H1 (cell line): ENCODE measurements at regions of chr6 and their contacts with region 1.

Region 1: GRCh38 chr6:32971581-32972352 is 3.4 kb downstream of the BRD2 start:
- DNase-seq: peak; percentile 98 to 99
- H3K4me3 ChIP-seq: peak overlapping the region; percentile 90 to 99 (median 98)
- H3K27ac ChIP-seq: peak overlapping the region; percentile 99
- H3K4me1 ChIP-seq: peaks cover 0 to 14% (median 7%) of the 10 kb centered on the region in 4 experiments; a peak in 5 of 7 replicates
- H3K27me3 ChIP-seq: no peaks in the 10 kb centered on the region
- CTCF ChIP-seq: no peak; a peak in 1 of 4 replicates
- EP300 ChIP-seq: no peak; a peak in 1 of 3 replicates
- POLR2A ChIP-seq: peak in 1 of 2 experiments; percentile 99; a peak in 2 of 3 replicates
- RAD21 ChIP-seq: no peak

Region 2: DNA sequence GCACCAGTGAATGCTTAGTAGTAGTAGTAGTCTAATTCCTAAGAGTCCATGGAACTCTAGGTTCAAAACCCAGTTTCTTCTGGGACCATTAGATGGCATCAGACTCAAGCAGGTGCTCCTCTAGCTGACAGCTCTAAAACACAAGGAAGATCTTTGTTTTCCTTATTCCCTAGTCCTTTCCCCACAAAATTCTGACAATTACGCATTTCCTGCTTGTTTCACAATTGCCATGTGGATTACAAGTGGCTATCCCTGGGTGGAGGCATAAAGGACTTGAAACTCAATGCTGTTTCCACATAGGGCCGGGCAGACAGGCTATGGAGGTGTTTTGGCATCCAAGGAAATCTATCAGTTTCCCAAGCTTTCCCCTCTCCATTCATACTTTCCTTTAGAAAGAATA is 145.8 kb before region 1 on chr6:
- CTCF ChIA-PET with region 1: interaction called, 4 read pairs
- POLR2A ChIA-PET with region 1: interaction called, 13 read pairs
- DNase-seq: no peak
- H3K4me3 ChIP-seq: no peak overlapping the region
- H3K27ac ChIP-seq: no peak overlapping the region
- H3K4me1 ChIP-seq: peaks cover 0 to 4% (median 0%) of the 10 kb centered on the region in 4 experiments; a peak in 1 of 7 replicates
- H3K27me3 ChIP-seq: no peaks in the 10 kb centered on the region; a peak in 1 of 7 replicates
- CTCF ChIP-seq: peak in 2 of 3 experiments; percentile 56 to 63; a peak in 3 of 4 replicates
- EP300 ChIP-seq: no peak
- POLR2A ChIP-seq: no peak
- RAD21 ChIP-seq: peak; percentile 73 to 83

Region 3: DNA sequence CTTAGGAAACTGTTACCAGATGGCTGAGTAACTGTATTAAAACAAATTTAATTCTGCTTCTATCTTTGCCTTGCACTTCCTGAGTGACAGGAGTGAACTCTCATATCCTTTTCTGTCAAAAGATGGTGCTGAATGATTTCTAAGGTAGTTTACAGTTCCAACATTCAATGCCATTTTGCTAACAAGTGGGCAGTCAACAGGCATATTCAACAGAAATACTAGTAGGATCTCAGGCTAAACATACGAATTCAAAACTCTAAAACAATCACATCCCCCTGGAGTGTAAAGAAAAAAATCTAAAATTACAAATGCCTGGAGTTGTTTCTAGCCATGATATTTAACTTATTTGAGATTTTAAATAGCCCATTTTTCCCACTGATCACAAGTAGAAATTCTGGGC is 111.1 kb before region 1 on chr6:
- CTCF ChIA-PET with region 1: interaction called, 3 read pairs
- POLR2A ChIA-PET with region 1: interaction called, 49 read pairs
- DNase-seq: no peak
- H3K4me3 ChIP-seq: no peak overlapping the region
- H3K27ac ChIP-seq: no peak overlapping the region
- H3K4me1 ChIP-seq: peaks cover 0 to 3% (median 0%) of the 10 kb centered on the region in 4 experiments; a peak in 5 of 7 replicates
- H3K27me3 ChIP-seq: peaks cover 0 to 6% (median 6%) of the 10 kb centered on the region in 4 experiments; a peak in 5 of 7 replicates
- CTCF ChIP-seq: no peak
- EP300 ChIP-seq: no peak
- POLR2A ChIP-seq: no peak
- RAD21 ChIP-seq: no peak

Region 4: DNA sequence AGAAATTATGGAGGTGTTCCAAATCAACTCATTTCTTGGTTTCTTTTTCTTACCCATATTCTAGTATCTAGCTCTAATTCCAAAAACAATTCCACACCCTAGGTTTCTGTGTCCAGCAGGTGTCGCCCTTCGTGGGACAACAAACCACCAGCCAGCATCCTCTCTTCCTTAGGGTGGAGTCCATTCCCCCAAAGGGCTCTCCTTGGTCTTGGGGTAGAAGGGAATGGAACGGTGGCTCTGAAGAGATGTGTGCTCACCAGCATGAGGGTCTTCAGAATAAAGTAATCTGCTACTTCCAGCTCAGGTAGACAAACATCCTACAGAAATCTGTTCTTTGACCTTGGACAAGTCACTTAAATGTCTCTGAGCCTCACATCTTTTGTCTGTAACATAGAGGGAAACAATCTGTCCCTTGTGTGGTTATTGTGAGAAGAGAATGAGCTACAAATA is 38.1 kb before region 1 on chr6:
- CTCF ChIA-PET with region 1: interaction called, 22 read pairs
- POLR2A ChIA-PET with region 1: interaction called, 45 read pairs
- DNase-seq: peak in 1 of 2 experiments; percentile 89
- H3K4me3 ChIP-seq: no peak overlapping the region
- H3K27ac ChIP-seq: no peak overlapping the region
- H3K4me1 ChIP-seq: no peaks in the 10 kb centered on the region
- H3K27me3 ChIP-seq: no peaks in the 10 kb centered on the region
- CTCF ChIP-seq: peak; percentile 75 to 84 (median 82)
- EP300 ChIP-seq: no peak
- POLR2A ChIP-seq: no peak
- RAD21 ChIP-seq: peak; percentile 59 to 73

Region 5: GRCh38 chr6:32984605-32985389 is 13.0 kb after region 1 on chr6:
- CTCF ChIA-PET with region 1: interaction called, 110 read pairs
- POLR2A ChIA-PET with region 1: interaction called, 1,158 read pairs
- DNase-seq: peak; percentile 60 to 92
- H3K4me3 ChIP-seq: no peak overlapping the region
- H3K27ac ChIP-seq: no peak overlapping the region
- H3K4me1 ChIP-seq: peaks cover 0 to 6% (median 2%) of the 10 kb centered on the region in 4 experiments; a peak in 4 of 7 replicates
- H3K27me3 ChIP-seq: no peaks in the 10 kb centered on the region
- CTCF ChIP-seq: peak; percentile 83 to 94 (median 90)
- EP300 ChIP-seq: no peak
- POLR2A ChIP-seq: peak in 1 of 2 experiments; percentile 38; a peak in 1 of 3 replicates
- RAD21 ChIP-seq: peak; percentile 90 to 94

Region 6: GRCh38 chr6:33118525-33119123 is 146.9 kb after region 1 on chr6:
- CTCF ChIA-PET with region 1: no interaction called
- POLR2A ChIA-PET with region 1: interaction called, 113 read pairs
- DNase-seq: peak in 1 of 2 experiments; percentile 59
- H3K4me3 ChIP-seq: peak overlapping the region; percentile 82 to 96 (median 92)
- H3K27ac ChIP-seq: peak overlapping the region; percentile 98
- H3K4me1 ChIP-seq: peaks cover 2 to 21% (median 9%) of the 10 kb centered on the region in 4 experiments; a peak in 6 of 7 replicates
- H3K27me3 ChIP-seq: no peaks in the 10 kb centered on the region
- CTCF ChIP-seq: peak in 2 of 3 experiments; percentile 26 to 69; a peak in 2 of 4 replicates
- EP300 ChIP-seq: no peak
- POLR2A ChIP-seq: 0 out of 3 replicates have a peak, but pooled peaks of 1 of the 2 experiments have one; percentile 17
- RAD21 ChIP-seq: peak; percentile 44

Region 7: DNA sequence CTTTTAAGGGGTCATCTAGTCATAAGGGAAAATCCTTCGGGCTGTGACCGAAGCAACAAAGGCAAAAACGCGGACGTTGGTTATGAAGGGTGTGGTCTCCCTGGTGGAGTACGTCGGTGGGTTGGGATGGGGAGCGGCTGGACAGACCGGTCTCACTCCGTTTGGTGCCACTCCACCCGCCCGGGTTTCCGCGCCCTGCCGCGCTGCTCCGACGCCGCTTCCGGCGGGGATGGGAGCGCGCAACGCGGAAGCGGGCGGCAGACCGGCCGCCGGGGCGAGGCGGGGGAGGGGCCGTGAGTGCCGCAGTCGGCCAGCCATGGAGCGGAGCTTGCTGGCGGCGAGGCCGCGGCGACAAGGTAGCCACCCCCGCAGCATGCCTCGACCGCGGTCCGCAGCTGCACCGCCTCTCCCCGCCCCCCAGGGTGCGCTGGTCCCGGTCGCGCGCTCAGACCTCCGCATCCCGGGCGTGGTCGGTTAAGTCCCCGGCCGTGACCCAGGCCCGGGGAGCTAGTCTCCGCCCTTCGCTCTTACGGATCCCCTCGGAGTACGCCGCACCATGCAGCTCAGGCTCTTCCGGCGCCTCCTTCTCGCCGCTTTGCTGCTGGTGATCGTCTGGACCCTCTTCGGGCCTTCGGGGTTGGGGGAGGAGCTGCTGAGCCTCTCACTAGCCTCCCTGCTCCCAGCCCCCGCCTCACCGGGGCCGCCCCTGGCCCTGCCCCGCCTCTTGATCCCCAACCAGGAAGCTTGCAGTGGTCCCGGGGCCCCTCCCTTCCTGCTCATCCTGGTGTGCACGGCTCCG is 305.3 kb after region 1 on chr6 and contains the start of gene B3GALT4:
- CTCF ChIA-PET with region 1: interaction called, 4 read pairs
- POLR2A ChIA-PET with region 1: interaction called, 35 read pairs
- DNase-seq: peak; percentile 86 to 89
- H3K4me3 ChIP-seq: peak within 1 kb of the TSS; percentile 52 to 81 (median 59)
- H3K27ac ChIP-seq: peak within 1 kb of the TSS; percentile 55; the same call in 1 of the 2 replicates
- H3K4me1 ChIP-seq: peaks cover 3 to 35% (median 12%) of the 10 kb centered on the region in 4 experiments
- H3K27me3 ChIP-seq: no peaks in the 10 kb centered on the region
- CTCF ChIP-seq: peak in 2 of 3 experiments; percentile 40 to 62; a peak in 2 of 4 replicates
- EP300 ChIP-seq: 0 out of 3 replicates have a peak, but pooled peaks of 1 of the 2 experiments have one; percentile 23
- POLR2A ChIP-seq: peak in 1 of 2 experiments; percentile 93; a peak in 2 of 3 replicates
- RAD21 ChIP-seq: 0 out of 4 replicates have a peak, but pooled peaks of 1 of the 2 experiments have one; percentile 19
- total RNA-seq, gene B3GALT4: 3.0 and 4.2 TPM in 2 replicates